CD8-positive, alpha-beta T cell (primary cell): ENCODE measurements at regions of chr19 and their contacts with region 1.

Region 1: GRCh38 chr19:33771384-33772101 is 25.1 kb upstream of the KCTD15 start:
- DNase-seq: peak; percentile 35 to 71 (median 62)
- ATAC-seq: peak; percentile 46
- H3K4me3 ChIP-seq: no peak overlapping the region
- H3K4me3 Mint-ChIP-seq: no peak overlapping the region
- H3K27ac ChIP-seq: no peak overlapping the region
- H3K27ac Mint-ChIP-seq: no peak overlapping the region
- H3K4me1 ChIP-seq: no peaks in the 10 kb centered on the region
- H3K4me1 Mint-ChIP-seq: no peaks in the 10 kb centered on the region
- H3K27me3 ChIP-seq: peaks cover 0 to 4% of the 10 kb centered on the region in 2 experiments
- H3K27me3 Mint-ChIP-seq: peaks cover 18% of the 10 kb centered on the region
- CTCF ChIP-seq: peak; percentile 47

Region 2: DNA sequence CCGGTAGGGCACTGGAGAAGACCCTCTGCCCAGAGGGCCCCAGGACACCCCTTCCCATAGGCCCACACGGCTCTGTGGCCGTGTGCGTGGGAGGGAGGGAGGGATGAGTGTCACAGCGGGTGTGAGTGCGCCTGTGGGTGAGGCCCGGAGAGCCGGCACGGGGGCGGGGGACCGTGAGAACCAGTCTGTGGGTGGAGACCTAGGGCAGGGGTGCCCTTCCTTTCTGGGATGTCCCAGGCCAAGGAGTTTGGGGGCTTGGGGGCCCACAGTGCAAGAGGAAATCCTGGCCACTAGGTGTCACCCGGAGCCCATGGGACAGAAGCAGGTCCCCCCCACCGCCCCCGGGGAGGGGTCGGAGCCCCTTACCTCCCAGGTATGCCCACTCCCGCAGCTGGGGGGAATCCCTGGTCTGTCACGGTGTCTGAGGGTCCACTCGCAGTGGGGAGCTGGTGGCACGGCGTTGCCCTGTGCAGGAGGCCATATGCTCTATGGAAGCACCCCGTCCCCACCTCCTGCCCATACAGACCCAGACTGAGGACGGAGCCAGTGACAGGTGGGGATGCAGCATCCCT is 529.9 kb before region 1 on chr19:
- CTCF ChIA-PET with region 1: no interaction called
- POLR2A ChIA-PET with region 1: no interaction called
- intact Hi-C with region 1: loop called (anchors 2 to 5 kb)
- DNase-seq: peak in 4 of 9 experiments; percentile 28 to 85 (median 52)
- ATAC-seq: peak; percentile 34
- H3K4me3 ChIP-seq: no peak overlapping the region
- H3K4me3 Mint-ChIP-seq: no peak overlapping the region
- H3K27ac ChIP-seq: peak overlapping the region in 1 of 2 experiments; percentile 87
- H3K27ac Mint-ChIP-seq: no peak overlapping the region
- H3K4me1 ChIP-seq: peaks cover 4% of the 10 kb centered on the region
- H3K4me1 Mint-ChIP-seq: no peaks in the 10 kb centered on the region
- H3K27me3 ChIP-seq: no peaks in the 10 kb centered on the region
- H3K27me3 Mint-ChIP-seq: peaks cover 6% of the 10 kb centered on the region
- CTCF ChIP-seq: no peak

Region 3: DNA sequence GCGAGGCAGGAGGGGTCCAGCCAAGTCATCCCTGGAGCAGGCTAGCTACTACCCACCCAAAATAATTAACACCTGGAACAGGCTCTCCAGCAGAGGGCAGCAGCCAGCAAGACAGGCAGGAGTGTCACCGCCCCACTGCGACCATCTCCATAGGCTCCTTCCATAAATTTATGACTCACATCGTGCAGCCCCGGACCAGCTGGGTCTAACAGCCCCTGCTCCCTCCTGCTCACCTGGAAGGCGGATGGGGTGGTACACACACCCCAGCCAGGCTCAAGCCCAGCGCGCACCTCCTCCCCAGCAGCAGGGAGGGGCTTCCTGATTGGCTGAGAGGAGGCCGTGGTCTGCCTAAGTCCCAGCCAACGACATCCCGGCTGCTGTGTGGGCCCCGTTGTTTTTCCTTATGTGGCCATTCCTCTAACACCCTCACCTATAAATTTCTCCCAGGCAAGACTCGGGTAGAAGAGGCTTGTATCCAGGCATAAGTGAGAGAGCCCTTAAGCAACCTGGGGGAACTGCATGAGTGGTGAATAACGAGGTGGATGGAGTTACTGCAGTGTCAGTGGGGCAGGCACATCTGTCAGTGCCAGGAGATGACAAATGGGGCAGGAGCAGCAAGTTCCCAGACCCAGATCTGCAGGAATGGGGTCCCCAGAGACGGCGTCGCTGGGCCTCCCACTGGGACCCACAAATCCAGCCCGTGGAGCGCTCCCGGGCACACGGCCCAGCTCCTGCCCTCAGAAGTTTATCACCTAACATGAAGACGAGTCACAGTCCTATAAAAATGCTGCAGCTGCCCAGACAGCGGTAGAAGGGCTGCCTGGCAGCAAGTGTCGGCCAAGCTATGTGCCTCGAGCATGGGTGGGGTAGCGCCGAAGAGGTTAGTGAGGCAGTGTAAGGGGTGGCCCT is 355.0 kb before region 1 on chr19:
- CTCF ChIA-PET with region 1: interaction called, 22 read pairs
- POLR2A ChIA-PET with region 1: no interaction called
- intact Hi-C with region 1: loop called in 1 of 2 experiments (anchors 1 kb)
- DNase-seq: peak; percentile 37 to 78 (median 71)
- ATAC-seq: peak; percentile 92
- H3K4me3 ChIP-seq: peak overlapping the region; percentile 37 to 45
- H3K4me3 Mint-ChIP-seq: peak overlapping the region; percentile 74
- H3K27ac ChIP-seq: no peak overlapping the region
- H3K27ac Mint-ChIP-seq: no peak overlapping the region
- H3K4me1 ChIP-seq: peaks cover 5% of the 10 kb centered on the region
- H3K4me1 Mint-ChIP-seq: peaks cover 8% of the 10 kb centered on the region
- H3K27me3 ChIP-seq: no peaks in the 10 kb centered on the region
- H3K27me3 Mint-ChIP-seq: no peaks in the 10 kb centered on the region
- CTCF ChIP-seq: peak; percentile 60

Region 4: DNA sequence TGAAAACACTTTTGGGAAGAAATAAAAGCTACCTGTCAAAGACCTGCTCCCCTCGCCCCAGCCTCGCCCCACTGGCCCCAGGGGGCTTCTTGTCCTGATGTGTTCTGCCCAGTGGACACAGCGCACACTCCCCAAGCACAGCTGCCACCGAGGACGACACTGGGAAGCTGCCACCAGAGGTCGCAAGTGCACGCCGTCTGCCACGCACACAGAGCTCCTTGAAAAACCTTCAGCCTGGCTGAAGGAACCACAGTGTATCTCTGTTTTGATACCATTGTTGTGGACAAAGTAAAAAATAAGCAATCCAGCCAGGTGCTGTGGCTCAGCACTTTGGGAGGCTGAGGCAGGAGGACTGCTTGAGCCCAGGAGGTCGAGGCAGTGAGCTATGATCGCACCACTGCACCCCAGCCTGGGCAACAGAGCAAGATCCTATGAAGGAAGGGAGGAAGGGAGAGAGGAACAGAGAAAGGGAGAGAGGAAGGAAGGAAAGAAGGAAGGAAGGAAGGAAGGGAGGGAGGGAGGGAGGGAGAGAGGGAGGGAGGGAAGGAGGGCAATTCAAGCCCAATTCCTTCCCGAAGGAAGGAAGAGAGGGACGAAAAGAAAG is 340.8 kb before region 1 on chr19:
- CTCF ChIA-PET with region 1: interaction called, 11 read pairs
- POLR2A ChIA-PET with region 1: no interaction called
- intact Hi-C with region 1: loop called in 1 of 2 experiments (anchors 1 kb)
- DNase-seq: peak; percentile 20 to 76 (median 61)
- ATAC-seq: peak; percentile 74
- H3K4me3 ChIP-seq: no peak overlapping the region
- H3K4me3 Mint-ChIP-seq: peak overlapping the region; percentile 68
- H3K27ac ChIP-seq: peak overlapping the region in 1 of 2 experiments; percentile 29
- H3K27ac Mint-ChIP-seq: peak overlapping the region; percentile 89
- H3K4me1 ChIP-seq: peaks cover 6% of the 10 kb centered on the region
- H3K4me1 Mint-ChIP-seq: peaks cover 12% of the 10 kb centered on the region
- H3K27me3 ChIP-seq: no peaks in the 10 kb centered on the region
- H3K27me3 Mint-ChIP-seq: no peaks in the 10 kb centered on the region
- CTCF ChIP-seq: peak; percentile 69